Naive thymus-derived CD4-positive, alpha-beta T cell (primary cell): ENCODE measurements at regions of chr6 and their contacts with region 1.

Region 1: GRCh38 chr6:13538084-13538483 is 36.3 kb upstream of the SIRT5 start:
- DNase-seq: peak in 5 of 9 donors; percentile 18 to 38 (median 25)
- ATAC-seq: no peak
- H3K4me3 ChIP-seq: no peak overlapping the region
- H3K4me3 Mint-ChIP-seq: no peak overlapping the region
- H3K27ac ChIP-seq: no peak overlapping the region
- H3K27ac Mint-ChIP-seq: no peak overlapping the region
- H3K4me1 ChIP-seq: no peaks in the 10 kb centered on the region
- H3K4me1 Mint-ChIP-seq: peaks cover 0 to 3% (median 0%) of the 10 kb centered on the region in 7 donors
- H3K27me3 ChIP-seq: no peaks in the 10 kb centered on the region
- H3K27me3 Mint-ChIP-seq: no peaks in the 10 kb centered on the region

Region 2: GRCh38 chr6:13413900-13414555 is 124.1 kb before region 1 on chr6:
- CTCF ChIA-PET with region 1: interaction called, 3 read pairs
- POLR2A ChIA-PET with region 1: no interaction called
- intact Hi-C with region 1: loop called in 1 of 2 experiments (anchors 1 kb)
- DNase-seq: peak in 4 of 9 donors; percentile 19 to 61 (median 44)
- ATAC-seq: peak; percentile 84
- H3K4me3 ChIP-seq: no peak overlapping the region
- H3K4me3 Mint-ChIP-seq: no peak overlapping the region
- H3K27ac ChIP-seq: no peak overlapping the region
- H3K27ac Mint-ChIP-seq: peak overlapping the region in 4 of 9 donors; percentile 17 to 68 (median 43)
- H3K4me1 ChIP-seq: no peaks in the 10 kb centered on the region
- H3K4me1 Mint-ChIP-seq: peaks cover 0 to 18% (median 6%) of the 10 kb centered on the region in 7 donors
- H3K27me3 ChIP-seq: no peaks in the 10 kb centered on the region
- H3K27me3 Mint-ChIP-seq: no peaks in the 10 kb centered on the region

Region 3: DNA sequence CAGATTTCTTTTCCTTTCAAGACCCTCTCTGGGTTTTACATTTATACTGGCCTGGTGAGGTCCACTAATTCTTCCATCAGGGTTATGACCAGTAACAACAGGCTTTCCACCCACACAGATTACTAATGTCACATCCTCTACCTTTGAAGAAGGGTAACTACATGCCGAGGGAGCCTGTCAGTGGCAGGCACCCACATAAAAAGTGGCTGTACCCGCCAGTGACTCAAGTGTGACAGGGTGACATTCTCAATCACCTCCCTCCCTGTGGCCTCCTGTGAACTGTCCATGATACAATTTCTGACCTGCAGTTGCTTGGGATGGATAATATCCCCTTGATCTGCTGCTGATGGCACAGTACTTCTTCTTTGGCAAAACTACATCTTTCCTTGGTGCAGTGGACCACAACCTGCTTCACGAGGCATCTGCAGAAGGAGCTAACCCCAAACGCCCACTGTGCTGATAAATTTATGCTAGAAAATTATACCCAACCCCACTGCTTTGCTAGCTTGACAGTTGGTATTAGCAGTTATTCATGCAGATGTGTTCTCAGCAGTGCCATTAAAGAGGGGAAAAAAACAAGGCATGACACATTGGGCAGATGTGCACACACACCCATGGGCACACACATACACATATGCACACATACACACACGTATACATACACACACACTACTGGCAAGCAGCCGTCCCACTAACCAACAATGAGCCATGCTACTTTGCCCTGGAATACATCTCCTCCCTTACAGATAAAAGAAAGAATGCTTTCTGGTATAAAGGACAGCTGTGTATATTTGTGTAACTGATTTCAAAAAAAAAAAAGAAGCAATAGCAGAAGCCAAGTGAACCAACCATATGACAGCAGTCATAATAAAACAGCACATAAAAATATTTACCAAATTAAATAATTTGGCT is 71.5 kb before region 1 on chr6:
- CTCF ChIA-PET with region 1: no interaction called
- POLR2A ChIA-PET with region 1: no interaction called
- intact Hi-C with region 1: no loop called
- DNase-seq: peak in 1 of 9 donors; percentile 41
- ATAC-seq: no peak
- H3K4me3 ChIP-seq: no peak overlapping the region
- H3K4me3 Mint-ChIP-seq: peak overlapping the region in 1 of 10 donors; percentile 29
- H3K27ac ChIP-seq: no peak overlapping the region
- H3K27ac Mint-ChIP-seq: peak overlapping the region in 2 of 9 donors; percentile 16 to 48
- H3K4me1 ChIP-seq: peaks cover 0 to 10% of the 10 kb centered on the region in 2 donors
- H3K4me1 Mint-ChIP-seq: peaks cover 14 to 44% (median 29%) of the 10 kb centered on the region in 7 donors
- H3K27me3 ChIP-seq: no peaks in the 10 kb centered on the region
- H3K27me3 Mint-ChIP-seq: no peaks in the 10 kb centered on the region